ENCODE measurements at regions of chr12 and their contacts with region 1.

Region 1: GRCh38 chr12:13100882-13101769 is 2.3 kb downstream of the GSG1 start:
- DNase-seq: peak; percentile 98
- H3K4me3 Mint-ChIP-seq: peak overlapping the region; percentile 77
- H3K27ac Mint-ChIP-seq: peak overlapping the region; percentile 89
- H3K4me1 Mint-ChIP-seq: peaks cover 45% of the 10 kb centered on the region
- H3K27me3 Mint-ChIP-seq: peaks cover 3% of the 10 kb centered on the region

Region 2: DNA sequence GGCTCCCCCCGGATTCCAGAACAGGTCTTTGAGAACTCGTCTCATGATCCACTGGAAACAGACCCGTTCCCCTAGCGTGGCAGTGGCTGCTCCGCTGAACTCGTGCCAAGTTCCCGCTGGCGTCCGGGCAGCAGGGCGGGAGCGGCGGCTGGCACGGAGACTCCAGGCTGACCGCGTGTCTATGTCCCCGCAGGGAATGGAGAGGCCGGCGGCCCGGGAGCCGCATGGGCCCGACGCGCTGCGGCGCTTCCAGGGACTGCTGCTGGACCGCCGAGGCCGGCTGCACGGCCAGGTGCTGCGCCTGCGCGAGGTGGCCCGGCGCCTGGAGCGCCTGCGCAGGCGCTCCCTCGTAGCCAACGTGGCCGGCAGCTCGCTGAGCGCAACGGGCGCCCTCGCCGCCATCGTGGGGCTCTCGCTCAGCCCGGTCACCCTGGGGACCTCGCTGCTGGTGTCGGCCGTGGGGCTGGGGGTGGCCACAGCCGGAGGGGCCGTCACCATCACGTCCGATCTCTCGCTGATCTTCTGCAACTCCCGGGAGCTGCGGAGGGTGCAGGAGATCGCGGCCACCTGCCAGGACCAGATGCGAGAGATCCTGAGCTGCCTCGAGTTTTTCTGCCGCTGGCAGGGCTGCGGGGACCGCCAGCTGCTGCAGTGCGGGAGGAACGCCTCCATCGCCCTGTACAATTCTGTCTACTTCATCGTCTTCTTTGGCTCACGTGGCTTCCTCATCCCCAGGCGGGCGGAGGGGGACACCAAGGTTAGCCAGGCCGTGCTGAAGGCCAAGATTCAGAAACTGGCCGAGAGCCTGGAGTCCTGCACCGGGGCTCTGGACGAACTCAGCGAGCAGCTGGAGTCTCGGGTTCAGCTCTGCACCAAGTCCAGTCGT is 314.2 kb before region 1 on chr12:
- intact Hi-C with region 1: loop called (anchors 5 kb)
- DNase-seq: peak; percentile 93
- H3K4me3 Mint-ChIP-seq: peak overlapping the region; percentile 89
- H3K27ac Mint-ChIP-seq: peak overlapping the region; percentile 94
- H3K4me1 Mint-ChIP-seq: peaks cover 33% of the 10 kb centered on the region
- H3K27me3 Mint-ChIP-seq: no peaks in the 10 kb centered on the region

Region 3: DNA sequence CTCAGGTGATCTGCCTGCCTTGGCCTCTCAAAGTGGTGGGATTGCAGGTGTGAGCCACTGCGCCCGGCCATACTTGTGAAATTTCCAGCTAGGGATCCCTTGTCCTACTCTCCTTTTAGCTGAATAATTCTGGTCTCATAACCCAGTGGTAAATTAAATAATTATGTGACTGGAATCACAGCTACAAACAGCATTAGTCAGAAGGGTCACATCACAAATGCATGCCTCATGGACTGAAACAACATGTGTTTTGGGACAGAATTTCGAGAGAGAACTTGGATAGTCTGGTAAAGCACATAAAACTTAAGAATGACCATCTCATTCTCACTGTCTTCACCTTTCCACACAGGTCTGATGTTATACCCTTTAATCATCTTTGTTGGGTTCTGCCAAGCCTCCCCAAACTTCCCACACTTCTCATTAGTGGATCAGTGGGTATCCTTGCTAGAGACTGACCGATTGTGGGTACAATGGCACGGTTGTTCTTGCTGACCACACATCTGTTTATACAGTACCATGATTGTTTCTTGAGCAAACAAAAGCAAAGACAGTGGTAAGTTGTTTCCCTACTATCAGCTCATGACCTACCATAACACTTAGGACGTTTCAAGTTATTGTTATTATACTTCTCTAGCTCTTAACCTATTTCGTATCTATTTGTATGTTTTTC is 154.3 kb before region 1 on chr12:
- intact Hi-C with region 1: no loop called
- DNase-seq: no peak
- H3K4me3 Mint-ChIP-seq: no peak overlapping the region
- H3K27ac Mint-ChIP-seq: no peak overlapping the region
- H3K4me1 Mint-ChIP-seq: peaks cover 2% of the 10 kb centered on the region
- H3K27me3 Mint-ChIP-seq: peaks cover 6% of the 10 kb centered on the region

Region 4: GRCh38 chr12:12999959-13000615 is 101.0 kb before region 1 on chr12 and contains the start of gene HEBP1:
- intact Hi-C with region 1: loop called (anchors 1 kb)
- DNase-seq: peak; percentile 98
- H3K4me3 Mint-ChIP-seq: peak within 1 kb of the TSS; percentile 91
- H3K27ac Mint-ChIP-seq: peak within 1 kb of the TSS; percentile 89
- H3K4me1 Mint-ChIP-seq: peaks cover 30% of the 10 kb centered on the region
- H3K27me3 Mint-ChIP-seq: peaks cover 25% of the 10 kb centered on the region
- total RNA-seq, gene HEBP1: 12.0 and 13.8 TPM in 2 replicates

Region 5: GRCh38 chr12:13049816-13050215 is 51.3 kb before region 1 on chr12:
- intact Hi-C with region 1: no loop called
- DNase-seq: no peak
- H3K4me3 Mint-ChIP-seq: no peak overlapping the region
- H3K27ac Mint-ChIP-seq: no peak overlapping the region
- H3K4me1 Mint-ChIP-seq: peaks cover 15% of the 10 kb centered on the region
- H3K27me3 Mint-ChIP-seq: no peaks in the 10 kb centered on the region

Region 6: DNA sequence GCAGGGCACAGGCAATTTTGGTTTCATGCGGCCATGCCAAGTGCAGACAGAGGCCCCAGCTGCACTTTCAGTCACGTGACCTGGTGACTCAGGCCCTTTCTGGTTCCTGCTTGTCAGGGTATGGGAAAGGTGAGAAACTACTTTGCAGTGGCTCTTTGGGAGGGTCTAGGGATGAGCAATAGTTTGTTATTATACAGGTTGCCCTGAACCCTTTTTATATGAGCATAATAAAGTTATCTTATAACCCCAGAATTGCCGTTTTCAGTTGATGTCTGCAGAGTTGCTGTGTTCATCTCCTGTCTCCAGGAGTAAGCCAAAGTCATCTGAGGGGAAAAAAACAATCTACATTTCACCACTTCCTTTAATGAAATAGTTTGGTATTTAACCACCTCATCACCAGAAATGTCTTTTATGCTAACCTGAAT is 64.5 kb after region 1 on chr12:
- intact Hi-C with region 1: loop called (anchors 1 kb)
- DNase-seq: peak; percentile 87
- H3K4me3 Mint-ChIP-seq: no peak overlapping the region
- H3K27ac Mint-ChIP-seq: no peak overlapping the region
- H3K4me1 Mint-ChIP-seq: peaks cover 17% of the 10 kb centered on the region
- H3K27me3 Mint-ChIP-seq: peaks cover 18% of the 10 kb centered on the region

Region 7: GRCh38 chr12:13205809-13206559 is 104.9 kb after region 1 on chr12:
- intact Hi-C with region 1: loop called (anchors 1 kb)
- DNase-seq: peak; percentile 64
- H3K4me3 Mint-ChIP-seq: peak overlapping the region; percentile 47
- H3K27ac Mint-ChIP-seq: peak overlapping the region; percentile 76
- H3K4me1 Mint-ChIP-seq: peaks cover 36% of the 10 kb centered on the region
- H3K27me3 Mint-ChIP-seq: peaks cover 13% of the 10 kb centered on the region

Region 8: DNA sequence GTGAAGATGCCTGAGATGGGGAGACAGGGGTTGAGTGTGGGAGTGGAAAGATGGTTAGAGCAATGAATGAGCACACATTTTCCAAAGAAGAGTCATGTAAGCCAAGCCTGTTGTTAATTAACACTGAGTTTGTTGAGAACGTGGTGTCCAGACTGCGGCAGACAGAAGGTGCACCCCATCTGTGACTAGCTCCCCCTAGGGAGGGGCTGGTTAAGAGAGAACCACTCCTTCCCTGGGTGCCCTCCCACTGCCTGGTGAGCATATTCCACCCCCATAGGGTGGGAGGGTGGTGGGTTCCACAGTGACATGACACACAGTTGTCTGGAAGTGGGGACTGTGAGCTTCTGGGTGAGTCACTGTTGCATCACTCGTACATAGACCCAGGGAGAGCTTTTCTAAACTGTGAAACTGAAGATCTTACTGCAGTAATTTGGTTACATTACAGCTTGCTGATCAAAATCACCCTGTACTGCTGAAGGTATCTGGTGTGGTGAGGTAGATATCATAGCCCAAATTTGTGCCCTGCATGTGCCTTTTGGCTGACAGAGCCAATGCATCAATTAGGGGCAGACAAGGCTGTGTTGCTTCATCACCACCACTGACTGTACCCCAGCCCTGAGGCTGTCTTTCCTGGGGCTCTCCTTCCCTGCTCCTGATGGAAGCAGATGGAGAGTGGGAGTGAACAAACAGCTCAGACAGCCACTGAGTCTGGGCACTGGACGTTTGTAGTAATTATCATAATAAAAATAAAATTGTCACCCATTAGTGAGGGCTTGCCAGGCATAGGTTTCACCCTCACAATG is 246.3 kb after region 1 on chr12:
- intact Hi-C with region 1: loop called (anchors 5 kb)
- DNase-seq: no peak
- H3K4me3 Mint-ChIP-seq: no peak overlapping the region
- H3K27ac Mint-ChIP-seq: peak overlapping the region; percentile 77
- H3K4me1 Mint-ChIP-seq: peaks cover 6% of the 10 kb centered on the region
- H3K27me3 Mint-ChIP-seq: peaks cover 27% of the 10 kb centered on the region